ENCODE measurements at regions of chr16 and their contacts with region 1.

Region 1: GRCh38 chr16:13056607-13057006 is 155.2 kb downstream of the SHISA9 start:
- DNase-seq: peak; percentile 45
- ATAC-seq: peak; percentile 93
- H3K4me3 ChIP-seq: no peak overlapping the region
- H3K27ac ChIP-seq: no peak overlapping the region
- H3K4me1 ChIP-seq: no peaks in the 10 kb centered on the region
- H3K27me3 ChIP-seq: no peaks in the 10 kb centered on the region
- CTCF ChIP-seq: no peak
- EP300 ChIP-seq: peak; percentile 34 to 80; a peak in 3 of 4 replicates
- POLR2A ChIP-seq: no peak
- RAD21 ChIP-seq: no peak

Region 2: GRCh38 chr16:13067648-13068047 is 11.0 kb after region 1 on chr16:
- CTCF ChIA-PET with region 1: no interaction called
- POLR2A ChIA-PET with region 1: interaction called, 3 read pairs
- RAD21 ChIA-PET with region 1: interaction called, 12 read pairs
- SMC1A ChIA-PET with region 1: interaction called, 9 read pairs
- in situ Hi-C with region 1: no loop called
- intact Hi-C with region 1: no loop called
- DNase-seq: no peak
- ATAC-seq: no peak
- H3K4me3 ChIP-seq: no peak overlapping the region
- H3K27ac ChIP-seq: no peak overlapping the region
- H3K4me1 ChIP-seq: no peaks in the 10 kb centered on the region
- H3K27me3 ChIP-seq: no peaks in the 10 kb centered on the region
- CTCF ChIP-seq: no peak
- EP300 ChIP-seq: no peak
- POLR2A ChIP-seq: no peak
- RAD21 ChIP-seq: no peak

Region 3: GRCh38 chr16:13098536-13099127 is 42.0 kb after region 1 on chr16:
- CTCF ChIA-PET with region 1: interaction called, 6 read pairs
- POLR2A ChIA-PET with region 1: interaction called, 17 read pairs
- RAD21 ChIA-PET with region 1: interaction called, 26 read pairs
- SMC1A ChIA-PET with region 1: interaction called, 18 read pairs
- in situ Hi-C with region 1: no loop called
- intact Hi-C with region 1: no loop called
- DNase-seq: no peak
- ATAC-seq: peak; percentile 54
- H3K4me3 ChIP-seq: no peak overlapping the region
- H3K27ac ChIP-seq: no peak overlapping the region
- H3K4me1 ChIP-seq: no peaks in the 10 kb centered on the region
- H3K27me3 ChIP-seq: no peaks in the 10 kb centered on the region
- CTCF ChIP-seq: no peak
- EP300 ChIP-seq: no peak
- POLR2A ChIP-seq: no peak
- RAD21 ChIP-seq: no peak

Region 4: DNA sequence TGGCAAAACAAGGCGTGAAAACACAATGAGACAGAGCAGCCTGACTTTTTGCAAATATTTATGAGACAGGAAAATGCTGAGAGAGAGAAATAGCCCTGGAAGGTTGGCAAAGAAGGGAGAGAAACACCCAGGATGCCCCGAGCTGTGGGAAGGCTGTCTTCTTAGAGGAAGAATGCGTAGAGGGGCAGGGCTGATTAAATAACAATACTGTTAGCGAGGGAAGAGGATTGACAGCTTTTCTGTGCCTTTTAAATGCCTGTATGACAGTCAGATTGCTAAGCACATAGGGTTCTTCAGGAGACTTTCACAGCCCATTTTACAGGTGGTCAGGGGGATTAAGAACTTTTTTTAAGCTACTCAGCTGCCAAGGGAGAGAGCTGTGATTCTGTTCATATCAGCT is 64.0 kb after region 1 on chr16:
- CTCF ChIA-PET with region 1: interaction called, 3 read pairs
- POLR2A ChIA-PET with region 1: no interaction called
- RAD21 ChIA-PET with region 1: interaction called, 10 read pairs
- SMC1A ChIA-PET with region 1: interaction called, 5 read pairs
- in situ Hi-C with region 1: no loop called
- intact Hi-C with region 1: no loop called
- DNase-seq: no peak
- ATAC-seq: no peak
- H3K4me3 ChIP-seq: no peak overlapping the region
- H3K27ac ChIP-seq: no peak overlapping the region
- H3K4me1 ChIP-seq: no peaks in the 10 kb centered on the region
- H3K27me3 ChIP-seq: no peaks in the 10 kb centered on the region
- CTCF ChIP-seq: no peak
- EP300 ChIP-seq: no peak
- POLR2A ChIP-seq: no peak
- RAD21 ChIP-seq: no peak

Region 5: GRCh38 chr16:13436641-13437412 is 380.2 kb after region 1 on chr16:
- CTCF ChIA-PET with region 1: interaction called, 5 read pairs
- POLR2A ChIA-PET with region 1: no interaction called
- RAD21 ChIA-PET with region 1: interaction called, 9 read pairs
- SMC1A ChIA-PET with region 1: interaction called, 29 read pairs
- in situ Hi-C with region 1: no loop called
- intact Hi-C with region 1: no loop called
- DNase-seq: peak; percentile 86
- ATAC-seq: peak; percentile 85
- H3K4me3 ChIP-seq: no peak overlapping the region
- H3K27ac ChIP-seq: peak overlapping the region; percentile 46
- H3K4me1 ChIP-seq: peaks cover 25% of the 10 kb centered on the region
- H3K27me3 ChIP-seq: no peaks in the 10 kb centered on the region
- CTCF ChIP-seq: no peak; a peak in 1 of 6 replicates
- EP300 ChIP-seq: peak; percentile 53 to 88; a peak in 3 of 4 replicates
- POLR2A ChIP-seq: no peak
- RAD21 ChIP-seq: peak; percentile 13; the same call in 1 of the 2 replicates

Measured in GM12878 (cell line).